Activated CD8-positive, alpha-beta T cell treated with anti-CD3 and anti-CD28 coated beads for 36 hours (primary cell): ENCODE measurements at regions of chr2 and their contacts with region 1.

Region 1: DNA sequence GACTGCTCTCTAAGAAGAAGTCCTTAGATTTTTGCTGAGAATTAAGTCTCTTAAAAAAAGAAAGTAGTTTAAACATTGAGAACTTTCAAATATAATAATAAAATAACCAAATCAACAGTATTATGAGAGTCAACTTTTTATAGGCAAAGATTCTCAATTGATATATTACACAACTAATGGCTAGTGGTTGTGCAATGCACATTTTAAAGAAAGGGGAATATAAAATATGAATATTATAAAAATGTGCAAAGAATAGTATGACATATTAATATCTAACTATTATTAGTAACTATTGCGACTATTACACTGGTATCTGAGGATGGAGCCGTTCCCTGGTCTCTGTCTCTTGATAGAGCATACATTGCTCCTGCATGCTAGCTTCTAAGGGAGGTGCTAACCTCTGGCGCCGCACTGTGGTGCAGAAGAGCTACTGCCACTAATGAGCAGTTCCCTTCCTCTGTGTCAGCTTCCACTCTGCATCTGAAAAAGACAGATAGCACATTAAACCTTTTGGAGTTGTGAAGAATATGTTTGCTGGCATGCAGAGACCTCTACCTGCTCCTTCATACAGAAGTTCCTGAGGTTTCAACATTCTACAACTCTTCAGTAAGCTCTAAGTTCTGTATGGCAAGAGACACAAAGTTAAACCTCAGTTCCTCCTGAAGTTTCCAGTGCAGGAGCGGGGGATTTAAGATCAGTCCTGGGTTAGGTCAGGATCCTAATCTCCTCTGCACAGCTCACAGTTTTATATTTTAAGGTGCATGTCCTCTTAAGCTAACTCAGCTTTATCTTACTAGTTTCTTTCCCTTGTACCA is 3.5 kb upstream of the SLC9A2 start:
- DNase-seq: peak; percentile 69
- ATAC-seq: peak; percentile 89
- H3K4me3 Mint-ChIP-seq: no peak overlapping the region
- H3K27ac Mint-ChIP-seq: no peak overlapping the region
- H3K4me1 Mint-ChIP-seq: peaks cover 13% of the 10 kb centered on the region
- H3K27me3 Mint-ChIP-seq: peaks cover 36% of the 10 kb centered on the region
- CTCF ChIP-seq: peak; percentile 91

Region 2: GRCh38 chr2:102514061-102514785 is 101.6 kb before region 1 on chr2:
- CTCF ChIA-PET with region 1: interaction called, 12 read pairs
- POLR2A ChIA-PET with region 1: no interaction called
- intact Hi-C with region 1: loop called (anchors 10 kb)
- DNase-seq: no peak
- ATAC-seq: no peak
- H3K4me3 Mint-ChIP-seq: no peak overlapping the region
- H3K27ac Mint-ChIP-seq: no peak overlapping the region
- H3K4me1 Mint-ChIP-seq: peaks cover 11% of the 10 kb centered on the region
- H3K27me3 Mint-ChIP-seq: peaks cover 17% of the 10 kb centered on the region
- CTCF ChIP-seq: no peak

Region 3: GRCh38 chr2:102520028-102520427 is 95.8 kb before region 1 on chr2:
- CTCF ChIA-PET with region 1: interaction called, 12 read pairs
- POLR2A ChIA-PET with region 1: no interaction called
- intact Hi-C with region 1: loop called (anchors 10 kb)
- DNase-seq: peak; percentile 43
- ATAC-seq: peak; percentile 65
- H3K4me3 Mint-ChIP-seq: no peak overlapping the region
- H3K27ac Mint-ChIP-seq: no peak overlapping the region
- H3K4me1 Mint-ChIP-seq: no peaks in the 10 kb centered on the region
- H3K27me3 Mint-ChIP-seq: no peaks in the 10 kb centered on the region
- CTCF ChIP-seq: peak; percentile 74

Region 4: DNA sequence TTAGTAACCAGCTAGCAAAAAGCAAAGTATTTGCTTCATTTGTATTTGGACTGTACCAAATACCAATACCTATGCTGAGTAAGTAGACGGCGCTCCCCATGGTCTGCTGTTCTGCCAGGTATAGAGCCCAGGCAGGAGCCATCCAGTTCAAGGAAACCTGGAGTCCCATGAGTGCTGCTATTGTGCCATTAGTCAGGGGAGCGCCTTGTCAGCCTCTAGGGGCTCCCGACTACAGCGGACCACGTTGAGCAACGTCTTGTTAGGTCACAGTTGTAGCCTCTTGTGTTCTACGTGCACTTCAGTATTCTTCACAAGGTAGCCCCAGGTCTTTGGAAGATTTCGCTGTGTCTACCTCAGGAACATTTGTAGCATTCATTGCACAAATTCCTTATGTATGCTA is 18.0 kb before region 1 on chr2:
- CTCF ChIA-PET with region 1: interaction called, 12 read pairs
- POLR2A ChIA-PET with region 1: no interaction called
- intact Hi-C with region 1: no loop called
- DNase-seq: no peak
- ATAC-seq: no peak
- H3K4me3 Mint-ChIP-seq: no peak overlapping the region
- H3K27ac Mint-ChIP-seq: no peak overlapping the region
- H3K4me1 Mint-ChIP-seq: no peaks in the 10 kb centered on the region
- H3K27me3 Mint-ChIP-seq: peaks cover 19% of the 10 kb centered on the region
- CTCF ChIP-seq: no peak

Region 5: GRCh38 chr2:102703748-102704147 is 87.9 kb after region 1 on chr2:
- CTCF ChIA-PET with region 1: interaction called, 25 read pairs
- POLR2A ChIA-PET with region 1: no interaction called
- intact Hi-C with region 1: no loop called
- DNase-seq: peak; percentile 43
- ATAC-seq: no peak
- H3K4me3 Mint-ChIP-seq: no peak overlapping the region
- H3K27ac Mint-ChIP-seq: no peak overlapping the region
- H3K4me1 Mint-ChIP-seq: no peaks in the 10 kb centered on the region
- H3K27me3 Mint-ChIP-seq: peaks cover 6% of the 10 kb centered on the region
- CTCF ChIP-seq: peak; percentile 32